ENCODE measurements at regions of chr17 and their contacts with region 1.

Region 1: DNA sequence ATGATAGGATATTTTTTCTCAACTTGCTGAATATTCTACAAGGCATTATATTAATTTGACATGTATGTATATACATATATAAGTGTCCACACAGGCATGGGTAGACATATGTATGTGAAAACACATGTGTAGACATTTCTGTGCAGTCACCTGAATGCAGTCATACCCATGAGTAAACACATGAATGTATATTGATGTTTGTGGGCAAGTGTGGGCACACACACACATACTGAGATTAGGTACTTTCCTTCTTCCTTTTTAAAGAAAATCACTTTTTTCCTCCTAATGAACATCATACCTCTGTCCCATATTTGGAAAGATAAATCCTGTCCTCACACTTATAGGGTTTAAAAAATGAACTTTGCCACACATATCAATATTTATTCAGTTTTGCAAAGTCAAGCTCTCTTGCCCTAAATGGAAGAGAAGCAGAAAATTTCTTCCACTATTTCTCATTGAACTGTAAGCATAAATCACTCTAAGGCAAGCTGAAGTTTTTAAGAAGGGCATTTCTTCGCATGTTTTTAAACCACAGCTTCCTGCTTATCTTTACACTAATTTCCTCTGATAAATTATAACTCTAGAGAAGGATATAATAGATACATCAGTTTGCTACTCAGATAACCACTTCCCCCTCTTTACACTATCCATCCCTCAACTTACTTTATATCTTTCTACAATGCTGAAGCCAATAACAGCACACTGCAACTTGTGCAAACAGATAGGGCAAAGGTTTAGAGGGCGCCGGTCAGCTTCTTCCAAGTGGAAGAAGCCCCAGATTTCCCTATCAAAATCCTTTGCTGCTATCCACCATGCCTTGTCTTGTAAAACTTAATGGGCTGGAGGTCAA is 49.6 kb upstream of the LRRC37A3 start:
- DNase-seq: no peak
- H3K4me3 ChIP-seq: no peak overlapping the region
- H3K27ac ChIP-seq: no peak overlapping the region
- H3K4me1 ChIP-seq: no peaks in the 10 kb centered on the region
- H3K27me3 ChIP-seq: no peaks in the 10 kb centered on the region
- CTCF ChIP-seq: no peak
- POLR2A ChIP-seq: no peak

Region 2: DNA sequence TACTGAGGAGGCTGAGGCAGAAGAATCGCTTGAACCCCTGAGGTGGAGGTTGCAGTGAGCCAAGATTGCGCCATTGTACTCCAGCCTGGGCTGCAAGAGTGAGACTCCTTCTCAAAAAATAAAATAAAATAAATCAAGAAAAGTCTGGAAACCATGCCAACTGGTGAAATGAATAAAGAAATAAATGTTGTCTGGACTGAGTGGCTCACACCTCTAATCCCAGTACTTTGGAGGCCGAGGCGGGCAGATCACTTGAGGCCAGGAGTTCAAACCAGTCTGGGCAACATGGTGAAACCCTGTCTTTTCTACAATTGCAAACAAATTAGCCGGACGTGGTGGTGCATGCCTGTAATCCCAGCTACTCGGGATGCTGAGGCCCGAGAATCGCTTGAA is 48.9 kb before region 1 on chr17:
- intact Hi-C with region 1: loop called (anchors 5 kb)
- DNase-seq: no peak
- H3K4me3 ChIP-seq: peak overlapping the region; percentile 89 to 94
- H3K27ac ChIP-seq: peak overlapping the region; percentile 96 to 98
- H3K4me1 ChIP-seq: no peaks in the 10 kb centered on the region
- H3K27me3 ChIP-seq: no peaks in the 10 kb centered on the region
- CTCF ChIP-seq: no peak
- POLR2A ChIP-seq: no peak

Region 3: DNA sequence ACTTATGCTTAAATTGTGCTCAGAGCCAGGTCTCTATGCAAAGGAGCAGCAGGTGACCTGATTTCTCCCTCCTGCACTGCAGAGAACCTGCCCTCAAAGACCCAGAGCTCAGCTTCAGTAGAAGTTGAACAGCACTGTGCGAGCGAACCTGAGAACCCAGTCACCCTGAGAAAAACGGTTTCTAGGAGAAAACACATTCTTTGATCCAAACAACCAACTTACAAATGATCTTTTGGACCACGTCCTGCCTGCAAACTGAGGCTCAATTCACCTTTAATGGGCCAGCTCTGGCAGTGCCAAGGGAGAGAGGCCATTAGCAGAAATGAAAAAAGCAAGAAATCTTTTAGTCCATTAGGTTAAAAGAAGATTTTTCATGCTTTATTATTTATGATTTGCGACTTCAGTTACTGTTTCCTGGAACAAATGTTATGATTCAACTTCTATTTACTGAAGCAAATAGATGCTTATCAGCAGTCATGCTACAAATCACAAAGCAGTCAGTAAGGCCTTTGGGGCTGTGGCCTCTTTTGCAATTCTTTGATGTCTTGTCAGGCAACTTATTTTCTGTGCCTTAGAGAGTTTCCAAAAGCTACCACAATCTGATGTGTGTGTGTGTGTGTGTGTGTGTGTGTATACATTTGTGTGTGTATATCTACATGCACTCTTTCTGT is 16.1 kb after region 1 on chr17:
- intact Hi-C with region 1: no loop called
- DNase-seq: peak; percentile 65
- H3K4me3 ChIP-seq: no peak overlapping the region
- H3K27ac ChIP-seq: peak overlapping the region; percentile 80 to 82
- H3K4me1 ChIP-seq: peaks cover 19% of the 10 kb centered on the region
- H3K27me3 ChIP-seq: no peaks in the 10 kb centered on the region
- CTCF ChIP-seq: no peak
- POLR2A ChIP-seq: no peak

Region 4: GRCh38 chr17:65100316-65101140 is 131.7 kb after region 1 on chr17:
- intact Hi-C with region 1: loop called (anchors 2 kb)
- DNase-seq: peak; percentile 85
- H3K4me3 ChIP-seq: peak overlapping the region; percentile 44 to 46
- H3K27ac ChIP-seq: peak overlapping the region; percentile 56 to 70
- H3K4me1 ChIP-seq: no peaks in the 10 kb centered on the region
- H3K27me3 ChIP-seq: no peaks in the 10 kb centered on the region
- CTCF ChIP-seq: peak; percentile 90 to 96 (median 94)
- POLR2A ChIP-seq: peak; percentile 15

Region 5: DNA sequence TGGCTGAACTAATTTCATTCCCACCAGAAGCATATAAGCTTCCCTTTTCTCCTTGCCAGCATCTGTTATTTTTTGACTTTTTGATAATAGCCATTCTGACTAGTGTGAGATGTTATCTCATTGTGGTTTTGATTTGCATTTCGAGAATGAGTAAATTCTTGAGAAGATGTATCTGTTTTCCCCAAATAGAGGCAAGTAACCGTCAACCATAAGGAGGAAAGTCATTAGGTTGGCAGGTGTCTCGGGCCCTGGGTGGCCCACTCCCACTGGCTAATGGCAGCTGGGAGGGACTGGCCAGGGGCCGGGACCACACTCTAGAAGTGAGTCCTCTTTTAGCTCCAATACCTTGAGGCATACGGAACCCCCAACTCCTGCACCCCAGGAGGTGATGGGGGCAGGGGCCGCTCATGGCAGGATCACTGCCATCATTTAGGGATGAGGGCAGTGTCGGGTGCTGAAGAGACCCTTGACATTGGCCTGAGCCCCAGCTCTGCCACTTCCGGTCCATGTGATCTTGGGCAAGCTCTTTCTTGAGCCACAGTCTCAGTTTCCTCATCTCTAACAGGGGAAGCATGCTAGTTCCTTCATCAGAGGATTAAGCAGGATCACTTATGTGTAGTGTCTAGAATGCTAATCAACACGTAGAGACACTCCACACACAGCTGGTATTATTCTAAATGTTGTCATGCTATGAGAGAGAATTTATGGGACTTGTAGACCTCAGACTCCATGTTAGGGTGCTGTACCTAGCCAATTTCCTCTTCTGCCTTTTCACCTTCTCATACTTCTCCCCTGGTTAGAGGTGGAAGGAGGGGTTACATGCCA is 212.6 kb after region 1 on chr17:
- intact Hi-C with region 1: no loop called
- DNase-seq: no peak
- H3K4me3 ChIP-seq: no peak overlapping the region
- H3K27ac ChIP-seq: no peak overlapping the region
- H3K4me1 ChIP-seq: no peaks in the 10 kb centered on the region
- H3K27me3 ChIP-seq: no peaks in the 10 kb centered on the region
- CTCF ChIP-seq: no peak
- POLR2A ChIP-seq: no peak

Region 6: DNA sequence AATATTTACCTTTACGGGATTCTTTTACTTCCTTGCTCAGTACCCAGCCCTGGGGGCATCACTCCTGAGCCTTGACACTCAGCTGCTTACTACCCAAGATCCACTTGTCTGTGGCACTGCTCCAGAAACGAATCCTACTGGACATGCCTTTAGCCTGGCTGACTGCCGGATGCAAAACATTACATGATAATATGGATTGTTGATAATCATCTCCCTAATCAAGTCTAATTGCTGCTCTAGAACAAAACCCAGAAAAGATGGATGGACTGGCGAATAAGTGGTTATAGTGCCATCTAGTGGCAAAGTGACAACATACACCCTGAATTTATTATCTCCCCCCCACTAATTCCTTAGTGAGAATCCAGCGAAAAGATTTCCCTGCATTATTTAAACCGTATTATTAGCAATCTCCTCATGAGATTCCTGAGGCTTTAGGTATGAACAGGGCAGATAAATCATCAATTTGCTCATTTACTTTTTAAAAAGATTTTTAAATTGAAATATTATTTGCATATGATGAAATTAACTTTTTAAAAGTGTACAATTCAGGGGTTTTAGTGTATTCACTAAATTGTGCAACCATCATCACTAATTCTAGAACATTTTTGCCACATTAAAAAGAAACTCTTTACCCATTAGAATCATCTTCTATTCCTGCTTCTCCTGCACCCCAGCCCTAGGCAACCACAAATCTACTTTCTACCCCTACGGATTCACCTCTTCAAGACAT is 229.9 kb after region 1 on chr17:
- intact Hi-C with region 1: loop called (anchors 10 kb)
- DNase-seq: peak; percentile 6
- H3K4me3 ChIP-seq: no peak overlapping the region
- H3K27ac ChIP-seq: no peak overlapping the region
- H3K4me1 ChIP-seq: no peaks in the 10 kb centered on the region
- H3K27me3 ChIP-seq: no peaks in the 10 kb centered on the region
- CTCF ChIP-seq: peak; percentile 43 to 89 (median 75)
- POLR2A ChIP-seq: no peak

Region 7: DNA sequence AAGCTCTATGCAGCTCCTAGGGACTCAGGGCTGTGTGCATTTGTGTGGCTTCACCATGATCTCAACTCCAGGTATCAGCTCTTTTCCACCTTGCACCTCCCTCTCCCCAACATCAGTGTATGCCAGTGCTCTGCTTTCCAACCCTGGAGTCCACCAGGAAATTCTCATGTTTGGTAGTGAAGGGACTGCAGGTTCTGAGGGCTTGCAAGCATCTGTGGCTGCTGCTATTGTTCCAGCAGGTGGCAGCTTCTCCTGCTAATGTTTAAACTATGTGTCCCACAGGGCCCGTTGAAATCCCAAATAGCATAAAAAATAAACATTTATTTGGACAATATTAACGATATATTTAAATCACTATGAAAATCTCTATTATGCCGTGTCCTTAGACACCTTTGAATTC is 250.2 kb after region 1 on chr17:
- intact Hi-C with region 1: no loop called
- DNase-seq: no peak
- H3K4me3 ChIP-seq: no peak overlapping the region
- H3K27ac ChIP-seq: no peak overlapping the region
- H3K4me1 ChIP-seq: no peaks in the 10 kb centered on the region
- H3K27me3 ChIP-seq: no peaks in the 10 kb centered on the region
- CTCF ChIP-seq: no peak
- POLR2A ChIP-seq: no peak

Measured in prostate gland (tissue), 2 donors.